Ascending aorta (tissue), 2 donors: ENCODE measurements at regions of chr3 and their contacts with region 1.

Region 1: DNA sequence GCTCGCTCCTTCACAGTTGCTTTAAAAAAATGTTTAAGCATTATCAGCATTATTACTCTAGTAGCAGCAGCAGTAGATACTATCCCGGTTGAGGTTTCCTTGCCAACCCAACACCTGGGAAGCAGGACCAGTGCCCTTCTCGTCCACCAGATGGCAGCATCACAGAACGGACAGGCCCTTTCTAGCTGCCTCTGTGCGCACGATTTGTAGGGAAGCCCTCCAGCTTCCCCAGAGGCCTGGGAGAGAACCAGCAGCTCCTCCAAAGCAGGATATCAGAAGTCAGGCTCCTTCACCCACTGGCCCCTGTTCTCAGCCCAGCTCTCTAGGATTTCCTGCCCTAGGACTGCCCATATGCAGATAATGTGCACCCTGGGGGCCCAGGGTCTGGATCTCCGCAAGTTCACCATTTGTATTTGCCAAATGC is 16.8 kb upstream of the ESYT3 start:
- DNase-seq: peak in 1 of 2 donors; percentile 84
- H3K4me3 ChIP-seq: no peak overlapping the region
- H3K27ac ChIP-seq: no peak overlapping the region
- H3K4me1 ChIP-seq: no peaks in the 10 kb centered on the region
- H3K27me3 ChIP-seq: no peaks in the 10 kb centered on the region
- CTCF ChIP-seq: peak; percentile 63 to 90 (median 89)

Region 2: GRCh38 chr3:138329127-138329983 is 88.2 kb before region 1 on chr3 and contains the start of gene NME9:
- intact Hi-C with region 1: loop called (anchors 5 kb)
- DNase-seq: peak; percentile 53 to 93
- H3K4me3 ChIP-seq: peak within 1 kb of the TSS; percentile 51 to 76
- H3K27ac ChIP-seq: peak within 1 kb of the TSS; percentile 2 to 29
- H3K4me1 ChIP-seq: peaks cover 3 to 6% of the 10 kb centered on the region in 2 donors
- H3K27me3 ChIP-seq: no peaks in the 10 kb centered on the region
- CTCF ChIP-seq: peak in 2 of 3 experiments; percentile 49 to 68
- total RNA-seq, gene NME9: not detected

Region 3: GRCh38 chr3:138923531-138923994 is 506.0 kb after region 1 on chr3:
- intact Hi-C with region 1: loop called (anchors 2 kb)
- DNase-seq: peak; percentile 41 to 87
- H3K4me3 ChIP-seq: no peak overlapping the region
- H3K27ac ChIP-seq: no peak overlapping the region
- H3K4me1 ChIP-seq: peaks cover 0 to 2% of the 10 kb centered on the region in 2 donors
- H3K27me3 ChIP-seq: no peaks in the 10 kb centered on the region
- CTCF ChIP-seq: peak; percentile 42 to 76 (median 72)

Region 4: DNA sequence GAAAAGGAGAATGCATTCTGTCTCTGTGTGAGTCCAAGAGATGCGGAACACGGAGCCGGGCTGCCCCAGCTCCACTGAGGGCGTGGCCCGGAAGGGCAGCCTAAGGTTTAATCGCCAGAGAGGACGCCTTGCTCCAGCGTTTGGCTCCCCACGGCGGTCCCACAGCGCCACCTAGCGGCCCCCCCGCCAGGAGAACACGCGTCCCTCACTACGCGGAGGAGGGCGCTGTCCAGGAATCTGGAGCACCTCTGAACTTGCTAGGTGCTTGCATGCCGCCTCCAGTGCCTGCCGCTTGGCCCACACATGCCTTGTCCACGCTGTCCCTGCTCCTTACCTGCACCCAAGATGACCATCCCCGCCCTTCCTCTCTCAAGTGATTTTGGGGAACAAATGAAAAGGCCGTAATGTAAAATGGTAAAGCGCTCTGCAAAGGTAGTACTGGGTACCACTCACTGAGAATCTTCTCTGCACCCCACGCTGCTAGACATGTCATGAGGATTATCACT is 911.8 kb after region 1 on chr3:
- intact Hi-C with region 1: loop called (anchors 2 kb)
- DNase-seq: peak; percentile 22 to 88
- H3K4me3 ChIP-seq: peak overlapping the region; percentile 35 to 44
- H3K27ac ChIP-seq: no peak overlapping the region
- H3K4me1 ChIP-seq: no peaks in the 10 kb centered on the region
- H3K27me3 ChIP-seq: no peaks in the 10 kb centered on the region
- CTCF ChIP-seq: peak; percentile 88 to 91 (median 89)

Region 5: GRCh38 chr3:140395134-140396075 is 1977.8 kb after region 1 on chr3:
- intact Hi-C with region 1: no loop called
- DNase-seq: no peak
- H3K4me3 ChIP-seq: no peak overlapping the region
- H3K27ac ChIP-seq: no peak overlapping the region
- H3K4me1 ChIP-seq: no peaks in the 10 kb centered on the region
- H3K27me3 ChIP-seq: no peaks in the 10 kb centered on the region
- CTCF ChIP-seq: no peak